Mammary epithelial cell (primary cell): ENCODE measurements at regions of chr5 and their contacts with region 1.

Region 1: DNA sequence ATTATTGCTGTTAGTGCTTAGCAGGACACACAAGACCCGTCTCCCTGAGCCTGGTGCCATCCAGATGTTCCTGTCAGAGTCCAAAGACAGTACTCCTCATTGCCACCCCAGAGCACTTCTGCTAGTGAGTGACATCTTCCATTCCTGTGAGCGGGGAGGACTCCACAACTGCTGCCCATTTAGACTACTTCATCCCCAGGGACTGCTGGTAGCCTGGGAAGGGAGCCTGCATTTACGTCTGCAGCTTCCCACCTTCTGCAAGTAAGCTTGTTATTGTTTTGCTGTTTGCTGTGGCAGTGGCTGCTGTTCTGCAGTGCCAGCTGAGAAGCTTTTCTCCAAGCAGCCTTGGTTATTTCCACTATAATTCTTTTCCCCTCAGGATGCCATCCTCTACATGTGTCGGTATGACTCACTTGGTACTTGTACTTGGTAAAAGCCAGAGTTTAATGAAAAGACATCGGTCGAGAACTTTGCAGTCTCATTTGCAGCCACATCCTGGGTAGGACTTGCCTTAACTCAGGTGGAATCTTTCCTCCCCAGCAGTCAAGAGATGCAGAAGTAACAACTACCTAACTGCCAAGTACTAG is 10.6 kb upstream of the MAP1B start:
- DNase-seq: peak; percentile 25
- H3K4me3 ChIP-seq: no peak overlapping the region
- H3K27ac ChIP-seq: no peak overlapping the region
- H3K4me1 ChIP-seq: no peaks in the 10 kb centered on the region
- H3K27me3 ChIP-seq: no peaks in the 10 kb centered on the region
- CTCF ChIP-seq: no peak

Region 2: DNA sequence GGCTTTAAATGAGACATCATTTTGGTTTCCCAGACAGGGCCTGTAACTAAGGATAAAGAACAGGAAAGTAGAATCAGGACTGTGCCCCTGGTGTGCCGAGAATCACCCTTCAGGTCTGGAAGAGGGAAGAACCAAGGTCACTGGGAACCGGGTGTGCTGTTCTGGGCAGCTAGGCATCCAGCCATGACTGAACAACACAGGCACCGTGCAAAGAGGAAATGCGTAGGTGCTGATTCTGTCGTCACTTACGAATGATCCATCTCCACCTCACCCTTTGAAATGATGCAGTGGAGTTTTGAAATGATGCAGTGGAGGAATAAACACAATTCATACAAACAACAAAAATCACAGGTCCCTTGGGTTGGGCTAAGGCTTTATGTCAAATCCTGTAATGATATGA is 75.0 kb after region 1 on chr5:
- CTCF ChIA-PET with region 1: no interaction called
- dilution Hi-C with region 1: loop called (anchors 5 kb)
- in situ Hi-C with region 1: no loop called
- intact Hi-C with region 1: no loop called
- DNase-seq: no peak
- H3K4me3 ChIP-seq: no peak overlapping the region
- H3K27ac ChIP-seq: no peak overlapping the region
- H3K4me1 ChIP-seq: peaks cover 7% of the 10 kb centered on the region
- H3K27me3 ChIP-seq: no peaks in the 10 kb centered on the region
- CTCF ChIP-seq: no peak

Region 3: DNA sequence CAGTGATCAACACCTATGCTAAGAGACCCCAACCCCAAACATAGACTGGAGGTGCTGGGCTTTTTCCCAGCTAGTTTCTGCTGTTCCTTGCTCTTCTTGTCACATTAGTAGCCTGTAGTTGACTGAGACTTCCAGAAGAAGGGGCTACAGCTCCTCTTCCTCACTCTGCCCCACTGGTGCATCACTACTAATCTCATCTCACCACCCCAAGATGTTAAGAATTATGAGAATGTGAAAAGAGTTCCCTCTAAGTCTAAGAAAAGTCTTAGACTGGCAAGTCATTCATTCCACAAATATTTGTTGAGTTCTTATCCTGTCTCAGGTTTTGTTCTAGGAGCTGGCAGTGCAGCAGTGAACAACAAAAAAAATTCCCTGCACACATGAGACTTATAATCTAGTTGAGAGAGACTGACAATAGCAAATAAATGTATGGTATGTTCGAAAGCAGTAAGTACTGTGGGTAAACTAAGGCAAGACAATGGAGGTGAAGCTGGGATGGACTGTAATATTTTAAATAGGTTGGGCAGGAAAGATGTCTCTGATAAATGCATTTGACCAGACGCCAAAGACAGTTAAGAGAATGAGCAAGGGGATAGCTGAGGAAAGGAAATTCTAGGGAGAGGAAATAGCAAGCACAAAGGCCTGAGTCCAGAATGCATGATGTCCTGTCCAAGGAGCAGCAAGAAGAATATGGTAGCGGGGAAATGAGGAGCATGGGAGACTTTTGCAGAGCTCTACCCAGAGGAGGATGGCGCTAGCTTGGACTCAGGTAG is 315.8 kb after region 1 on chr5:
- CTCF ChIA-PET with region 1: no interaction called
- dilution Hi-C with region 1: no loop called
- in situ Hi-C with region 1: no loop called
- intact Hi-C with region 1: no loop called
- DNase-seq: no peak
- H3K4me3 ChIP-seq: no peak overlapping the region
- H3K27ac ChIP-seq: no peak overlapping the region
- H3K4me1 ChIP-seq: no peaks in the 10 kb centered on the region
- H3K27me3 ChIP-seq: no peaks in the 10 kb centered on the region
- CTCF ChIP-seq: peak in 1 of 2 donors; percentile 11